Naive thymus-derived CD4-positive, alpha-beta T cell (primary cell): ENCODE measurements at regions of chr13 and their contacts with region 1.

Region 1: GRCh38 chr13:74246487-74246886 is 112.3 kb upstream of the KLF12 start:
- DNase-seq: peak in 1 of 9 donors; percentile 42
- ATAC-seq: no peak
- H3K4me3 ChIP-seq: peak overlapping the region; percentile 17
- H3K4me3 Mint-ChIP-seq: peak overlapping the region in 9 of 10 donors; percentile 26 to 90 (median 74)
- H3K27ac ChIP-seq: peak overlapping the region; percentile 63
- H3K27ac Mint-ChIP-seq: peak overlapping the region in 8 of 9 donors; percentile 85 to 98 (median 97)
- H3K4me1 ChIP-seq: peaks cover 78 to 88% of the 10 kb centered on the region in 2 donors
- H3K4me1 Mint-ChIP-seq: peaks cover 59 to 98% (median 96%) of the 10 kb centered on the region in 7 donors
- H3K27me3 ChIP-seq: no peaks in the 10 kb centered on the region
- H3K27me3 Mint-ChIP-seq: peaks cover 0 to 9% (median 0%) of the 10 kb centered on the region in 5 donors

Region 2: GRCh38 chr13:73715114-73715910 is 531.2 kb before region 1 on chr13:
- CTCF ChIA-PET with region 1: no interaction called
- POLR2A ChIA-PET with region 1: no interaction called
- intact Hi-C with region 1: loop called in 1 of 2 experiments (anchors 5 kb)
- DNase-seq: peak in 8 of 9 donors; percentile 53 to 85 (median 77)
- ATAC-seq: peak; percentile 90
- H3K4me3 ChIP-seq: peak overlapping the region; percentile 7
- H3K4me3 Mint-ChIP-seq: peak overlapping the region; percentile 72 to 86 (median 78)
- H3K27ac ChIP-seq: peak overlapping the region; percentile 67
- H3K27ac Mint-ChIP-seq: peak overlapping the region; percentile 87 to 99 (median 97)
- H3K4me1 ChIP-seq: peaks cover 34 to 43% of the 10 kb centered on the region in 2 donors
- H3K4me1 Mint-ChIP-seq: peaks cover 25 to 80% (median 58%) of the 10 kb centered on the region in 7 donors
- H3K27me3 ChIP-seq: no peaks in the 10 kb centered on the region
- H3K27me3 Mint-ChIP-seq: no peaks in the 10 kb centered on the region

Region 3: GRCh38 chr13:74194846-74195245 is 51.6 kb before region 1 on chr13:
- CTCF ChIA-PET with region 1: no interaction called
- POLR2A ChIA-PET with region 1: interaction called, 4 read pairs
- intact Hi-C with region 1: loop called in 1 of 2 experiments (anchors 2 kb)
- DNase-seq: peak in 5 of 9 donors; percentile 3 to 22 (median 16)
- ATAC-seq: no peak
- H3K4me3 ChIP-seq: no peak overlapping the region
- H3K4me3 Mint-ChIP-seq: peak overlapping the region in 4 of 10 donors; percentile 23 to 57 (median 40)
- H3K27ac ChIP-seq: no peak overlapping the region
- H3K27ac Mint-ChIP-seq: peak overlapping the region in 5 of 9 donors; percentile 21 to 89 (median 50)
- H3K4me1 ChIP-seq: peaks cover 6 to 26% of the 10 kb centered on the region in 2 donors
- H3K4me1 Mint-ChIP-seq: peaks cover 15 to 43% (median 41%) of the 10 kb centered on the region in 7 donors
- H3K27me3 ChIP-seq: no peaks in the 10 kb centered on the region
- H3K27me3 Mint-ChIP-seq: peaks cover 0 to under 1% (median 0%) of the 10 kb centered on the region in 5 donors

Region 4: GRCh38 chr13:74230984-74231501 is 15.4 kb before region 1 on chr13:
- CTCF ChIA-PET with region 1: interaction called, 3 read pairs
- POLR2A ChIA-PET with region 1: interaction called, 115 read pairs
- intact Hi-C with region 1: loop called (anchors 1 kb)
- DNase-seq: peak in 7 of 9 donors; percentile 37 to 78 (median 69)
- ATAC-seq: peak; percentile 85
- H3K4me3 ChIP-seq: peak overlapping the region; percentile 61
- H3K4me3 Mint-ChIP-seq: peak overlapping the region; percentile 72 to 87 (median 84)
- H3K27ac ChIP-seq: peak overlapping the region; percentile 70
- H3K27ac Mint-ChIP-seq: peak overlapping the region; percentile 86 to 97 (median 90)
- H3K4me1 ChIP-seq: peaks cover 0 to 29% of the 10 kb centered on the region in 2 donors
- H3K4me1 Mint-ChIP-seq: peaks cover 8 to 62% (median 52%) of the 10 kb centered on the region in 7 donors
- H3K27me3 ChIP-seq: no peaks in the 10 kb centered on the region
- H3K27me3 Mint-ChIP-seq: no peaks in the 10 kb centered on the region

Region 5: GRCh38 chr13:74258961-74259360 is 12.5 kb after region 1 on chr13:
- CTCF ChIA-PET with region 1: interaction called, 5 read pairs
- POLR2A ChIA-PET with region 1: interaction called, 22 read pairs
- intact Hi-C with region 1: loop called in 1 of 2 experiments (anchors 2 kb)
- DNase-seq: no peak
- ATAC-seq: no peak
- H3K4me3 ChIP-seq: no peak overlapping the region
- H3K4me3 Mint-ChIP-seq: peak overlapping the region in 3 of 10 donors; percentile 19 to 49 (median 40)
- H3K27ac ChIP-seq: no peak overlapping the region
- H3K27ac Mint-ChIP-seq: peak overlapping the region in 3 of 9 donors; percentile 72 to 90 (median 72)
- H3K4me1 ChIP-seq: peaks cover 34 to 42% of the 10 kb centered on the region in 2 donors
- H3K4me1 Mint-ChIP-seq: peaks cover 26 to 63% (median 49%) of the 10 kb centered on the region in 7 donors
- H3K27me3 ChIP-seq: no peaks in the 10 kb centered on the region
- H3K27me3 Mint-ChIP-seq: peaks cover 0 to 4% (median 0%) of the 10 kb centered on the region in 5 donors

Region 6: GRCh38 chr13:74270018-74270417 is 23.5 kb after region 1 on chr13:
- CTCF ChIA-PET with region 1: no interaction called
- POLR2A ChIA-PET with region 1: interaction called, 6 read pairs
- intact Hi-C with region 1: loop called in 1 of 2 experiments (anchors 2 kb)
- DNase-seq: no peak
- ATAC-seq: no peak
- H3K4me3 ChIP-seq: no peak overlapping the region
- H3K4me3 Mint-ChIP-seq: no peak overlapping the region
- H3K27ac ChIP-seq: no peak overlapping the region
- H3K27ac Mint-ChIP-seq: peak overlapping the region in 1 of 9 donors; percentile 39
- H3K4me1 ChIP-seq: no peaks in the 10 kb centered on the region
- H3K4me1 Mint-ChIP-seq: peaks cover 0 to 34% (median 16%) of the 10 kb centered on the region in 7 donors
- H3K27me3 ChIP-seq: no peaks in the 10 kb centered on the region
- H3K27me3 Mint-ChIP-seq: peaks cover 0 to 5% (median 0%) of the 10 kb centered on the region in 5 donors